OCI-LY7 (cell line): ENCODE measurements at regions of chr7 and their contacts with region 1.

Region 1: GRCh38 chr7:32761451-32762205 is 129.9 kb downstream of the KBTBD2 start:
- DNase-seq: no peak
- H3K4me3 ChIP-seq: no peak overlapping the region
- H3K27ac ChIP-seq: no peak overlapping the region
- H3K4me1 ChIP-seq: no peaks in the 10 kb centered on the region
- CTCF ChIP-seq: no peak

Region 2: GRCh38 chr7:33591490-33592065 is 830.0 kb after region 1 on chr7:
- CTCF ChIA-PET with region 1: no interaction called
- POLR2A ChIA-PET with region 1: no interaction called
- intact Hi-C with region 1: no loop called
- DNase-seq: no peak
- H3K4me3 ChIP-seq: no peak overlapping the region
- H3K27ac ChIP-seq: no peak overlapping the region
- H3K4me1 ChIP-seq: no peaks in the 10 kb centered on the region
- CTCF ChIP-seq: no peak

Region 3: GRCh38 chr7:33932832-33933468 is 1171.3 kb after region 1 on chr7:
- CTCF ChIA-PET with region 1: no interaction called
- POLR2A ChIA-PET with region 1: no interaction called
- intact Hi-C with region 1: loop called (anchors 10 kb)
- DNase-seq: peak; percentile 50
- H3K4me3 ChIP-seq: no peak overlapping the region
- H3K27ac ChIP-seq: no peak overlapping the region
- H3K4me1 ChIP-seq: no peaks in the 10 kb centered on the region
- CTCF ChIP-seq: peak; percentile 92